Activated T-helper 2 cell treated with anti-CD3 and anti-CD28 coated beads, Interferon-gamma antibody, Interleukin-2, Interleukin-4, amounts not matched to agents 10 μg/mL and 5 μg/mL and 100 μg/mL, durations not matched to agents 14 hours and 24 hours and 36 hours (primary cell): ENCODE measurements at regions of chr18 and their contacts with region 1.

Region 1: GRCh38 chr18:23924813-23925212 is 89.7 kb upstream of the TTC39C start:
- DNase-seq: no peak
- H3K4me3 Mint-ChIP-seq: no peak overlapping the region
- H3K27ac Mint-ChIP-seq: no peak overlapping the region
- H3K4me1 Mint-ChIP-seq: peaks cover 23% of the 10 kb centered on the region
- H3K27me3 Mint-ChIP-seq: peaks cover 12% of the 10 kb centered on the region

Region 2: DNA sequence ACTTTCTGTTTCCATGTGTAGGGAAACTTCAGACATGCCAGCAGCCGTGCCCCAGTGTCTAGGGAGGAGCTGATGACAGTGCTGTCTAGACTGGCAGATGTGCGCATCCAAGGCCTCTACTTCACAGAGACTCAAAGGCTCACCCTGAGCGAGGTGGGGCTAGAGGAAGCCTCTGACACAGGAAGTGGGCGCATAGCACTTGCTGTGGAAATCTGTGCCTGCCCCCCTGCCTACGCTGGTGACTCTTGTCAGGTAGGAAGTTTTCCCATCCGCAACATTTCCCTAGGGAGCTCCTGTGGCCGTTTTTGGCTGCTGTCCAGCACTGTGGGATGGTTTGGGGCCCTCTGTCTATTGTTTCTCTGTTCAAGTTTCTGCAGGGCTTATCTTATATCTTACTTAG is 53.4 kb before region 1 on chr18:
- intact Hi-C with region 1: loop called (anchors 10 kb)
- DNase-seq: peak; percentile 20
- H3K4me3 Mint-ChIP-seq: no peak overlapping the region
- H3K27ac Mint-ChIP-seq: no peak overlapping the region
- H3K4me1 Mint-ChIP-seq: peaks cover 33% of the 10 kb centered on the region
- H3K27me3 Mint-ChIP-seq: peaks cover 22% of the 10 kb centered on the region

Region 3: GRCh38 chr18:23902396-23902795 is 22.4 kb before region 1 on chr18:
- intact Hi-C with region 1: no loop called
- DNase-seq: no peak
- H3K4me3 Mint-ChIP-seq: no peak overlapping the region
- H3K27ac Mint-ChIP-seq: no peak overlapping the region
- H3K4me1 Mint-ChIP-seq: no peaks in the 10 kb centered on the region
- H3K27me3 Mint-ChIP-seq: peaks cover 25% of the 10 kb centered on the region

Region 4: DNA sequence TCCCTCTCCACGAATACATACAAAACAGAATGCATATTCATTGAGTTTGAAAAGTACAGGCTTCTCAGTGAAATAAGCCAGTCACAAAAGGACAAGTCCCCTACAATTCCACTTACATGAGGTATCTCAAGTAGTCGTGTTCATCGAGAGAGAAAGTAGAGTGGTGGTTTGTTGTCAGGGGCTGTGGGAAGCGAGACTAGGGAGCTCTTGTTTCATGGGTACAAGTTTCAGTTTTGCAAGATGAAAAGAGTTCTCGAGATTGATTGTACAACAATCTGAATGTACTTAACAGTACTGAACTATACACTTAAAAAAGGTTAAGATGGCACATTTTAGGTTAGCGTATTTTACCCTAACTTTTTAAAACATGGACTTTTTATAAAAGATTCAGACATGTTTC is 18.3 kb after region 1 on chr18:
- intact Hi-C with region 1: no loop called
- DNase-seq: peak; percentile 39
- H3K4me3 Mint-ChIP-seq: peak overlapping the region; percentile 47
- H3K27ac Mint-ChIP-seq: peak overlapping the region; percentile 1
- H3K4me1 Mint-ChIP-seq: peaks cover 40% of the 10 kb centered on the region
- H3K27me3 Mint-ChIP-seq: peaks cover 48% of the 10 kb centered on the region